Brain microvascular endothelial cell (primary cell): ENCODE measurements at regions of chr11 and their contacts with region 1.

Region 1: GRCh38 chr11:86938900-86939880 is 16.0 kb downstream of the FZD4 start:
- DNase-seq: no peak
- H3K4me3 ChIP-seq: no peak overlapping the region
- H3K27ac ChIP-seq: peak overlapping the region; percentile 74
- H3K27me3 ChIP-seq: no peaks in the 10 kb centered on the region
- CTCF ChIP-seq: peak; percentile 56

Region 2: DNA sequence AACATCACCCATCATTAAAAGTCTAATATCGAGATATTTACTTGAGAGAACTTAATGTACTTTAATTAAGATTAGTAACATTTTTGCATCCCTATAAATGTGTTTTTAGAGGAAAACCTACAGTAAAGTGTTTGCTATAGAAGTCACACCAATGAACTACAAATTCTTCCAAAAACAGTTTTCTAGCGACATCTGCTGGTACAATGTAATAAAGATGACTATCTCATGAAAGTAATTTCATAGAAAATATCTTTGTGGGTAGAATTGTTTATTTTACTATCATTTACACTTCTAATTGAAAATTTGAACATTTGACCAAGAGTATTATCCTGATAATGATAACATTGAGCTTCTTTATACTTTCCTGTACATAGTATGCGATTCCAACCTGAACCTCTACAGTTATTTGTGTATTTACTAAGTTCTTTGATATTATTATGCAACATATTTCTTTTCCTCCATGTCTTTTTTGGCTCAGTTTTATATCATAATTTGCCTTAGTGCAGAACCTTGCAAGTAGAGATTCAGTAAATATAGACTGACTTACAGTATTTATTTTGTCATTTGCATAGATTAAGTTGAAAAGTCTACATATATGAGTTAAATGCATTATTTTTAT is 351.2 kb after region 1 on chr11:
- in situ Hi-C with region 1: loop called (anchors 25 kb)
- DNase-seq: peak; percentile 9
- H3K4me3 ChIP-seq: no peak overlapping the region
- H3K27ac ChIP-seq: no peak overlapping the region
- H3K27me3 ChIP-seq: no peaks in the 10 kb centered on the region
- CTCF ChIP-seq: peak; percentile 34